Caco-2 (cell line): ENCODE measurements at regions of chr1 and their contacts with region 1.

Region 1: DNA sequence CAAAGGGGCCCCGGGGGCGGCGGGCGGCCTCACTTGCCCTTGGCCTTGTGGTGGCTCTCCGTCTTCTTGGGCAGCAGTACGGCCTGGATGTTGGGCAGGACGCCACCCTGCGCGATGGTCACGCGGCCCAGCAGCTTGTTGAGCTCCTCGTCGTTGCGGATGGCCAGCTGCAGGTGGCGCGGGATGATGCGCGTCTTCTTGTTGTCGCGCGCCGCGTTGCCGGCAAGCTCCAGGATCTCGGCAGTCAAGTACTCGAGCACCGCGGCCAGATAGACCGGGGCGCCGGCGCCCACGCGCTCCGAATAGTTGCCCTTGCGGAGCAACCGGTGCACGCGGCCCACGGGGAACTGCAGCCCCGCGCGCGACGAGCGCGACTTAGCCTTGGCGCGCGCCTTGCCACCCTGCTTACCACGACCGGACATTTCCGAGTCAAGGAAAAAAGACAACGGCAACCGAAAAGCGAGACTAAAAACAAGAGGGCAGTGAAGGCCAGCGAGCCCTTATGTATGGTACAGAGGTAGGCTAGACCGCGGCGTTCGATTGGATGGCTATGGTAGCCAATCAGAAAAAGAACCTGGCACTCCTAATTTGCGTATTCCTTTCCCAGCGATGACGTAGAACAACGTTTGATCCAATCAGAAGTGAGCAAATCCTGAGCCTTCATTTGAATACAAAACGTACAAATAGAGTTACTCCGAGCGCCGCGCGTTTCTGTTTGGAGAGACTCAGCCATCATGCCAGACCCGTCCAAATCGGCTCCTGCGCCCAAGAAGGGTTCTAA is 29.6 kb upstream of the RNF187 start:
- DNase-seq: peak; percentile 94 to 95
- H3K4me3 ChIP-seq: peak overlapping the region; percentile 72
- H3K4me3 Mint-ChIP-seq: peak overlapping the region; percentile 93
- H3K27ac Mint-ChIP-seq: peak overlapping the region; percentile 93
- H3K4me1 ChIP-seq: peaks cover 21% of the 10 kb centered on the region
- H3K4me1 Mint-ChIP-seq: peaks cover 23% of the 10 kb centered on the region
- H3K27me3 ChIP-seq: no peaks in the 10 kb centered on the region
- H3K27me3 Mint-ChIP-seq: no peaks in the 10 kb centered on the region
- CTCF ChIP-seq: peak; percentile 26 to 57

Region 2: DNA sequence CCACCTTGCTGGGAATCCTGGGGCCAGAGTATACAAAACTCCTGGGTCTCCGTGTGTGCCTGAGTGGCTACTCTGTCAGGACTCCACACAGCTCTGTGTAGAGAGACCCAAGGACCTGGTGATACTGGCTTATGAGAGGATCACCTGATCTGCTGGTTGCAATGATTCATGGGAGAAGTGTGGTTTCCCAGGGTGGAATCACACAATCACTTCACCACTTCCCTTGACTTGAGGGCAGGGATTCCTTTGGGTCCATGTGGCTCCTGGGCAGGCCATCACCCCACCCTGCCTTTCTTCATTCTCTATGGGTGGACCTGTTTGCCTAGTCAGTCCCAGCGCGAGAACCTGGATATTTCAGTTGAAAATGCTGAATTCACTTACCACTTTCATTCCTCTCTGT is 628.8 kb before region 1 on chr1:
- CTCF ChIA-PET with region 1: no interaction called
- POLR2A ChIA-PET with region 1: no interaction called
- intact Hi-C with region 1: no loop called
- DNase-seq: no peak
- H3K4me3 ChIP-seq: no peak overlapping the region
- H3K4me3 Mint-ChIP-seq: no peak overlapping the region
- H3K27ac Mint-ChIP-seq: no peak overlapping the region
- H3K4me1 ChIP-seq: no peaks in the 10 kb centered on the region
- H3K4me1 Mint-ChIP-seq: no peaks in the 10 kb centered on the region
- H3K27me3 ChIP-seq: no peaks in the 10 kb centered on the region
- H3K27me3 Mint-ChIP-seq: peaks cover 18% of the 10 kb centered on the region
- CTCF ChIP-seq: no peak

Region 3: DNA sequence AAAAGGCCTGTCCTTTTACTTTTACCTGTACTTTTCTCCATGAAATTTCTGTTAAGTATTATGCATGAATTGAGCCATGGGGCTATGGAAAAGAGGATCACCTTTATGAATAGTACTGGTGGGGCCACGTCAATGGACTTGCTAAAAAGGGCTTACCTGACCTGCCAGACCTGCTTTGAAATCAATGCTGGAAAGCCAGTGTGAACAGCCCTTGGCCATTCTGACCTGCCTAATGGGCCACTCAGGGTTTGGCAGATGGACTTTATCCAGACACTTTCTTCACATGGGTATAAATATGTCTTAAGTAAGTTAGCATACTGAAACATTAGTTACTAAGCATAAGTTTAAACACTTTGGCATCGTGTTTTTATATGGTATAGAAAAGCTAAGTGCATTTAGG is 325.8 kb before region 1 on chr1:
- CTCF ChIA-PET with region 1: interaction called, 3 read pairs
- POLR2A ChIA-PET with region 1: interaction called, 3 read pairs
- intact Hi-C with region 1: loop called (anchors 1 kb)
- DNase-seq: peak in 1 of 2 experiments; percentile 29
- H3K4me3 ChIP-seq: no peak overlapping the region
- H3K4me3 Mint-ChIP-seq: peak overlapping the region; percentile 90
- H3K27ac Mint-ChIP-seq: peak overlapping the region; percentile 90
- H3K4me1 ChIP-seq: peaks cover 12% of the 10 kb centered on the region
- H3K4me1 Mint-ChIP-seq: no peaks in the 10 kb centered on the region
- H3K27me3 ChIP-seq: no peaks in the 10 kb centered on the region
- H3K27me3 Mint-ChIP-seq: no peaks in the 10 kb centered on the region
- CTCF ChIP-seq: no peak

Region 4: DNA sequence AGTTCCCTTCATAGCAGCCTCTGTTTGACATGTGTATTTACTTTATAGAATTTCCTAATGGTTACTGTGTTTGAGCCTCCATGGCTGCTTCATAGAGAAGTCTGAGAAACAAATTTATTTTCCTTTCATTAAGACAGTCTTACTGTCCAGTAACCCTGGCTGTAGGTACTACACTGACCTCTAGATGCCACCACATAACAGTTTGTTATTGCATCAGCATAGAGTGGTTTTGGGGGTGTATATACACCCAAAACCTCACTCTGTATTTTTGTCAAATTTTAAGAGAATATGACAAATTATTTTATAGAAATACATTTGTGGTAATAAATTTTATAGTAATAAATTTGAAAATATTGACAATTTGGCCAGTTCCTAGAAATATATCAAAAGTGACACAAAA is 192.4 kb before region 1 on chr1:
- CTCF ChIA-PET with region 1: no interaction called
- POLR2A ChIA-PET with region 1: interaction called, 4 read pairs
- intact Hi-C with region 1: loop called (anchors 5 kb)
- DNase-seq: no peak
- H3K4me3 ChIP-seq: no peak overlapping the region
- H3K4me3 Mint-ChIP-seq: no peak overlapping the region
- H3K27ac Mint-ChIP-seq: no peak overlapping the region
- H3K4me1 ChIP-seq: no peaks in the 10 kb centered on the region
- H3K4me1 Mint-ChIP-seq: no peaks in the 10 kb centered on the region
- H3K27me3 ChIP-seq: no peaks in the 10 kb centered on the region
- H3K27me3 Mint-ChIP-seq: no peaks in the 10 kb centered on the region
- CTCF ChIP-seq: peak in 1 of 2 experiments; percentile 43

Region 5: GRCh38 chr1:228393248-228393699 is 64.3 kb before region 1 on chr1:
- CTCF ChIA-PET with region 1: no interaction called
- POLR2A ChIA-PET with region 1: interaction called, 15 read pairs
- intact Hi-C with region 1: no loop called
- DNase-seq: peak; percentile 35 to 36
- H3K4me3 ChIP-seq: no peak overlapping the region
- H3K4me3 Mint-ChIP-seq: no peak overlapping the region
- H3K27ac Mint-ChIP-seq: no peak overlapping the region
- H3K4me1 ChIP-seq: no peaks in the 10 kb centered on the region
- H3K4me1 Mint-ChIP-seq: no peaks in the 10 kb centered on the region
- H3K27me3 ChIP-seq: no peaks in the 10 kb centered on the region
- H3K27me3 Mint-ChIP-seq: no peaks in the 10 kb centered on the region
- CTCF ChIP-seq: peak; percentile 26 to 34

Region 6: GRCh38 chr1:228434686-228435085 is 22.9 kb before region 1 on chr1:
- CTCF ChIA-PET with region 1: interaction called, 4 read pairs
- POLR2A ChIA-PET with region 1: interaction called, 32 read pairs
- intact Hi-C with region 1: no loop called
- DNase-seq: no peak
- H3K4me3 ChIP-seq: no peak overlapping the region
- H3K4me3 Mint-ChIP-seq: no peak overlapping the region
- H3K27ac Mint-ChIP-seq: peak overlapping the region; percentile 94
- H3K4me1 ChIP-seq: peaks cover 36% of the 10 kb centered on the region
- H3K4me1 Mint-ChIP-seq: peaks cover 26% of the 10 kb centered on the region
- H3K27me3 ChIP-seq: no peaks in the 10 kb centered on the region
- H3K27me3 Mint-ChIP-seq: no peaks in the 10 kb centered on the region
- CTCF ChIP-seq: no peak

Region 7: GRCh38 chr1:228486596-228487335 is 29.2 kb after region 1 on chr1:
- CTCF ChIA-PET with region 1: interaction called, 4 read pairs
- POLR2A ChIA-PET with region 1: interaction called, 6 read pairs
- intact Hi-C with region 1: loop called (anchors 1 kb)
- DNase-seq: peak; percentile 91 to 94
- H3K4me3 ChIP-seq: peak overlapping the region; percentile 82
- H3K4me3 Mint-ChIP-seq: peak overlapping the region; percentile 92
- H3K27ac Mint-ChIP-seq: peak overlapping the region; percentile 99
- H3K4me1 ChIP-seq: peaks cover 5% of the 10 kb centered on the region; the same call in 1 of the 2 replicates
- H3K4me1 Mint-ChIP-seq: peaks cover 12% of the 10 kb centered on the region
- H3K27me3 ChIP-seq: no peaks in the 10 kb centered on the region
- H3K27me3 Mint-ChIP-seq: no peaks in the 10 kb centered on the region
- CTCF ChIP-seq: no peak

Region 8: DNA sequence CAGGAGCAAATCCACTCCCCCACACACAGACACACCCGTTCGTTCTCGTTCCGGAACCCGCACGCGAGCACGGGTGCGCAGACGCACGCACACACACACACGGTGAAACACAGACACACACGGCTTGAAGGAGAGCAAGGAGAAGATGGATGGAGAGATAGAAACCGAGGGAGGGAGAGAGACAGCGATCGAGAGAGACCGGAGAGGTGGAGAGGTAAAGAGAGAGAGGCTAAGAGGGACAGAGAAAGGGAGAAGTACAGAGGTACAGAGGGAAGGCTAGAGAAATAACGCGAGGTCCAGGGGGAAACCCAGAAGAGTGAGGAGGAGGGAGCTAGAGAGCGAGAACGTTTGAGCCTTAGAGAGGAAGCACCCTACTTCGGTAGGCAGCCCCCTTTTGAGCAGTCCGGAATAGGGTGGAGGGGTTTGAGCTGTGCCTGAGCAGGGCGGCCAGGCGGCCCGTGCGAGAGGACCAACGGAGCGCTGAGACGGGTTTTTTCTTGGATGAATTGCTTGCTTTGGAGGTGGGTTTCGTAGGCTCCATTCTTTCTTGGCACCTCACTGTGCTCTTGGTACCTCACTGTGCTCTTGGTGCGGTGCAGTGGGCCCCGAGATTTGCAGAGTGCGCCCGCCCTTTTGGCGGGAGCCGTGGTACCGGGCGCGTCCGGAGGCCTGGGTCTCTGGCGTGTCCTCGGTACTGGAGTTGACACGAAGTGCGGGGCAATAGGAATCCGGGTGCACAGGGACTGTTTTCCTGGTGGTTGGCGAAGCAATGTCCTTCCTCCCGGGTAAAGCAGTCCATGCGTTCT is 189.3 kb after region 1 on chr1:
- CTCF ChIA-PET with region 1: no interaction called
- POLR2A ChIA-PET with region 1: interaction called, 11 read pairs
- intact Hi-C with region 1: no loop called
- DNase-seq: peak; percentile 46 to 51
- H3K4me3 ChIP-seq: peak overlapping the region; percentile 54
- H3K4me3 Mint-ChIP-seq: peak overlapping the region; percentile 79
- H3K27ac Mint-ChIP-seq: peak overlapping the region; percentile 81
- H3K4me1 ChIP-seq: no peaks in the 10 kb centered on the region
- H3K4me1 Mint-ChIP-seq: peaks cover 7% of the 10 kb centered on the region
- H3K27me3 ChIP-seq: no peaks in the 10 kb centered on the region; the same call in 1 of the 2 replicates
- H3K27me3 Mint-ChIP-seq: no peaks in the 10 kb centered on the region
- CTCF ChIP-seq: no peak